T-cell (primary cell): ENCODE measurements at regions of chr7 and their contacts with region 1.

Region 1: DNA sequence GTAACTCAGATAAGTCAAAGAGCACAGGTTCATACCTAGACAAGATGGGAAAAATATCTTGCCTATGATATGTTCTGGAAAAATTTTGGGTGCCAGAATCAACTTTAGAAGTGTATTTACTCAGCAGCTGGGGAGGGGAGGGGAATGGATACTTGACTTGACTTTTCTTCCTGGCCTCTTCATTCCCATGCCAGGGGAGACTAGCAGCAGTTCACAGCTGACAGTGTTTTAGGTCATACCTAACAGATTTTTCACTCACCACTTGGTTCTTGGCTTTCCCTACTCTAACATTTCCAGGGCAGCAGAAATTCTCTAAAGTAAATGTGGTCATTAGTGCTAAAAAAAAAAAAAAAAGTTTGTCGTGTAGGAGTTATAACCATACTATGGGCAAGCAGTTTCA is 46.3 kb downstream of the TAS2R16 start:
- DNase-seq: no peak
- ATAC-seq: no peak
- H3K4me3 ChIP-seq: no peak overlapping the region
- H3K4me3 Mint-ChIP-seq: no peak overlapping the region
- H3K27ac ChIP-seq: no peak overlapping the region
- H3K27ac Mint-ChIP-seq: no peak overlapping the region
- H3K4me1 ChIP-seq: no peaks in the 10 kb centered on the region
- H3K4me1 Mint-ChIP-seq: no peaks in the 10 kb centered on the region
- H3K27me3 ChIP-seq: no peaks in the 10 kb centered on the region
- H3K27me3 Mint-ChIP-seq: no peaks in the 10 kb centered on the region

Region 2: GRCh38 chr7:122310119-122311021 is 638.8 kb before region 1 on chr7:
- CTCF ChIA-PET with region 1: no interaction called
- POLR2A ChIA-PET with region 1: no interaction called
- DNase-seq: no peak
- ATAC-seq: no peak
- H3K4me3 ChIP-seq: no peak overlapping the region
- H3K4me3 Mint-ChIP-seq: no peak overlapping the region
- H3K27ac ChIP-seq: no peak overlapping the region
- H3K27ac Mint-ChIP-seq: peak overlapping the region in 1 of 2 donors; percentile 27
- H3K4me1 ChIP-seq: no peaks in the 10 kb centered on the region
- H3K4me1 Mint-ChIP-seq: peaks cover 0 to 9% (median 5%) of the 10 kb centered on the region in 3 donors
- H3K27me3 ChIP-seq: peaks cover 12 to 48% of the 10 kb centered on the region in 2 experiments
- H3K27me3 Mint-ChIP-seq: peaks cover 63 to 77% of the 10 kb centered on the region in 2 donors

Region 3: DNA sequence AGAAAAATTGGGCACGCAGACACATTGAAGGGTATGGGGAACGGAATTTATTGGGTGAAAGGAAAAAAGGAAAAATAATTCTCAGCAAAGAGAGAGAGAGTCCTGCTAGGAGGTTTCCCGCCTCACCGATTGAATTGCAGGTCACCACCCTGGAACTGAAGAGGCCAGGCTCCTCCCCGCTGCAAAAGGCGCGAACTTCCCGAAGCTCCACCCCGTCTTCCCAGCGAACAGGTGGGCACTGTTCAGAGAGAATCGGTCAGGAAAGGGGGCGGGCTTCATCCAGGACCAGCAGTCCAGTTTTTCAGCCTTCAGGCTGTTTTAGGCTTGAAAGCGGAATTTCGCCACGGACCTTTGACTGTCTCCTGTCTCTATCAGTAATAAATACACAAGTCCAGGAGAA is 35.6 kb before region 1 on chr7:
- CTCF ChIA-PET with region 1: no interaction called
- POLR2A ChIA-PET with region 1: interaction called in 1 of 2 experiments, 10 read pairs
- DNase-seq: no peak
- ATAC-seq: no peak
- H3K4me3 ChIP-seq: no peak overlapping the region
- H3K4me3 Mint-ChIP-seq: no peak overlapping the region
- H3K27ac ChIP-seq: no peak overlapping the region
- H3K27ac Mint-ChIP-seq: no peak overlapping the region
- H3K4me1 ChIP-seq: no peaks in the 10 kb centered on the region
- H3K4me1 Mint-ChIP-seq: no peaks in the 10 kb centered on the region
- H3K27me3 ChIP-seq: no peaks in the 10 kb centered on the region
- H3K27me3 Mint-ChIP-seq: no peaks in the 10 kb centered on the region